ENCODE measurements at regions of chr7 and their contacts with region 1.

Region 1: GRCh38 chr7:158829342-158830210 is at the start of gene ESYT2:
- DNase-seq: peak in 1 of 2 donors; percentile 97
- H3K4me3 ChIP-seq: peak within 1 kb of the TSS; percentile 74 to 96
- H3K27ac ChIP-seq: peak within 1 kb of the TSS; percentile 97
- H3K4me1 ChIP-seq: peaks cover 17% of the 10 kb centered on the region
- H3K27me3 ChIP-seq: no peaks in the 10 kb centered on the region
- CTCF ChIP-seq: peak in 1 of 3 experiments; percentile 29
- POLR2A ChIP-seq: peak; percentile 95 to 96
- total RNA-seq, gene ESYT2: 82.5 TPM

Region 2: DNA sequence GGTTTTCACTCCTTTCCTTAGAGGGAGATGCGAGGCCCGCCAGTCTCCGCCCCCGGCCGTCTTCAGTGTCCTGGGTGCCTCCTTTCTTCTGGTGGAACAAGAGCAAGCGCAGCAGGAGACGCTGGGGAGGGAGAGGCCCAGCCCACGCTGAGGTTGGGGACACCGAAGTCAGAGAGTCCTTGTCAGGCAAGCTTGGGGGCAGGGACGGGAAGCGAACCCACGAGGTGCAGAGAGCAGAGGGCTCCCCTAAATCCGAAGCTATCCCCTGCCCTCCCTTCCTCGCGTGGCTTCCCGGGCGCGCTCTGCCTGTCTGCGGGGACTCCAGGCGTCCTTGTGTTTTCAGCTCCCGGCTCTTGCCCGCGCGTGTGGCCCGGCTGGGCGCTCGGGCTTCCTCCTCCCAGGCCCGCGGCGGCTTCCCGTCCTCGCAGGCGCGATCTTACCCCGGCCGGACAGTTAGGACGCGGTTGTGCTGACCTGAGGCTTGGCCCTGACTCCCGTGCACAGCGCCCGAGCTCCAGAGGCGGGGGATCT is 1751.4 kb before region 1 on chr7:
- intact Hi-C with region 1: no loop called
- DNase-seq: no peak
- H3K4me3 ChIP-seq: peak overlapping the region in 1 of 2 donors; percentile 13
- H3K27ac ChIP-seq: no peak overlapping the region
- H3K4me1 ChIP-seq: no peaks in the 10 kb centered on the region
- H3K27me3 ChIP-seq: no peaks in the 10 kb centered on the region
- CTCF ChIP-seq: no peak
- POLR2A ChIP-seq: no peak

Region 3: GRCh38 chr7:158782761-158783401 is 46.7 kb before region 1 on chr7:
- intact Hi-C with region 1: loop called (anchors 2 kb)
- DNase-seq: no peak
- H3K4me3 ChIP-seq: no peak overlapping the region
- H3K27ac ChIP-seq: peak overlapping the region; percentile 65
- H3K4me1 ChIP-seq: peaks cover 18% of the 10 kb centered on the region
- H3K27me3 ChIP-seq: no peaks in the 10 kb centered on the region
- CTCF ChIP-seq: peak in 1 of 3 experiments; percentile 13
- POLR2A ChIP-seq: no peak

Region 4: GRCh38 chr7:158863611-158864506 is 34.3 kb after region 1 on chr7:
- intact Hi-C with region 1: no loop called
- DNase-seq: no peak
- H3K4me3 ChIP-seq: peak overlapping the region; percentile 54 to 64
- H3K27ac ChIP-seq: peak overlapping the region; percentile 90
- H3K4me1 ChIP-seq: peaks cover 32% of the 10 kb centered on the region
- H3K27me3 ChIP-seq: no peaks in the 10 kb centered on the region
- CTCF ChIP-seq: no peak
- POLR2A ChIP-seq: no peak

Measured in vagina (tissue), 2 donors.